Heart left ventricle (tissue), 16 donors: ENCODE measurements at regions of chr17 and their contacts with region 1.

Region 1: GRCh38 chr17:28763804-28764266 is 20.0 kb downstream of the TRAF4 start:
- DNase-seq: peak in 3 of 5 donors; percentile 61 to 68 (median 64)
- ATAC-seq: peak in 2 of 4 donors; percentile 44 to 47
- H3K4me3 ChIP-seq: no peak overlapping the region
- H3K27ac ChIP-seq: no peak overlapping the region
- H3K4me1 ChIP-seq: peaks cover 0 to 23% (median 12%) of the 10 kb centered on the region in 12 donors
- H3K27me3 ChIP-seq: no peaks in the 10 kb centered on the region
- CTCF ChIP-seq: peak; percentile 85 to 95 (median 94)
- POLR2A ChIP-seq: no peak

Region 2: GRCh38 chr17:28644985-28645939 is 118.6 kb before region 1 on chr17 and contains the start of gene BLTP2:
- intact Hi-C with region 1: no loop called
- DNase-seq: peak; percentile 97 to 99 (median 98)
- ATAC-seq: peak; percentile 97 to 98 (median 98)
- H3K4me3 ChIP-seq: peak within 1 kb of the TSS; percentile 67 to 97 (median 90)
- H3K27ac ChIP-seq: peak within 1 kb of the TSS; percentile 85 to 98 (median 94)
- H3K4me1 ChIP-seq: peaks cover 4 to 60% (median 33%) of the 10 kb centered on the region in 12 donors
- H3K27me3 ChIP-seq: no peaks in the 10 kb centered on the region
- CTCF ChIP-seq: no peak
- POLR2A ChIP-seq: peak in 1 of 2 donors; percentile 91
- total RNA-seq, gene BLTP2: 63.6 to 116 (median 74.1) TPM

Region 3: GRCh38 chr17:28675980-28676379 is 87.9 kb before region 1 on chr17:
- intact Hi-C with region 1: no loop called
- DNase-seq: no peak
- ATAC-seq: no peak
- H3K4me3 ChIP-seq: no peak overlapping the region
- H3K27ac ChIP-seq: no peak overlapping the region
- H3K4me1 ChIP-seq: no peaks in the 10 kb centered on the region
- H3K27me3 ChIP-seq: no peaks in the 10 kb centered on the region
- CTCF ChIP-seq: peak in 2 of 12 donors; percentile 8 to 9
- POLR2A ChIP-seq: no peak

Region 4: GRCh38 chr17:28717578-28718333 is 46.1 kb before region 1 on chr17 and contains the start of gene RAB34:
- intact Hi-C with region 1: loop called in 1 of 10 experiments (anchors 5 kb)
- DNase-seq: peak; percentile 76 to 84 (median 80)
- ATAC-seq: peak in 3 of 4 donors; percentile 18 to 28 (median 23)
- H3K4me3 ChIP-seq: peak within 1 kb of the TSS; percentile 41 to 92 (median 74)
- H3K27ac ChIP-seq: peak within 1 kb of the TSS; percentile 66 to 96 (median 90)
- H3K4me1 ChIP-seq: peaks cover 0 to 61% (median 41%) of the 10 kb centered on the region in 12 donors
- H3K27me3 ChIP-seq: peaks cover 0 to 18% (median 0%) of the 10 kb centered on the region in 9 donors
- CTCF ChIP-seq: peak in 7 of 12 donors; percentile 16 to 49 (median 28)
- POLR2A ChIP-seq: peak in 1 of 2 donors; percentile 29
- total RNA-seq, gene RAB34: 11.5 to 31.7 (median 14.9) TPM

Region 5: GRCh38 chr17:28842282-28843012 is 78.6 kb after region 1 on chr17 and contains the start of gene FAM222B:
- intact Hi-C with region 1: loop called in 3 of 10 experiments (anchors 5 to 10 kb)
- DNase-seq: peak; percentile 84 to 94 (median 90)
- ATAC-seq: peak; percentile 93 to 100 (median 100)
- H3K4me3 ChIP-seq: peak within 1 kb of the TSS; percentile 53 to 94 (median 82)
- H3K27ac ChIP-seq: peak within 1 kb of the TSS; percentile 54 to 89 (median 78)
- H3K4me1 ChIP-seq: peaks cover 0 to 33% (median 8%) of the 10 kb centered on the region in 12 donors
- H3K27me3 ChIP-seq: no peaks in the 10 kb centered on the region
- CTCF ChIP-seq: peak in 2 of 12 donors; percentile 14 to 22
- POLR2A ChIP-seq: peak in 1 of 2 donors; percentile 71
- total RNA-seq, gene FAM222B: 14.4 to 33.2 (median 16.7) TPM

Region 6: DNA sequence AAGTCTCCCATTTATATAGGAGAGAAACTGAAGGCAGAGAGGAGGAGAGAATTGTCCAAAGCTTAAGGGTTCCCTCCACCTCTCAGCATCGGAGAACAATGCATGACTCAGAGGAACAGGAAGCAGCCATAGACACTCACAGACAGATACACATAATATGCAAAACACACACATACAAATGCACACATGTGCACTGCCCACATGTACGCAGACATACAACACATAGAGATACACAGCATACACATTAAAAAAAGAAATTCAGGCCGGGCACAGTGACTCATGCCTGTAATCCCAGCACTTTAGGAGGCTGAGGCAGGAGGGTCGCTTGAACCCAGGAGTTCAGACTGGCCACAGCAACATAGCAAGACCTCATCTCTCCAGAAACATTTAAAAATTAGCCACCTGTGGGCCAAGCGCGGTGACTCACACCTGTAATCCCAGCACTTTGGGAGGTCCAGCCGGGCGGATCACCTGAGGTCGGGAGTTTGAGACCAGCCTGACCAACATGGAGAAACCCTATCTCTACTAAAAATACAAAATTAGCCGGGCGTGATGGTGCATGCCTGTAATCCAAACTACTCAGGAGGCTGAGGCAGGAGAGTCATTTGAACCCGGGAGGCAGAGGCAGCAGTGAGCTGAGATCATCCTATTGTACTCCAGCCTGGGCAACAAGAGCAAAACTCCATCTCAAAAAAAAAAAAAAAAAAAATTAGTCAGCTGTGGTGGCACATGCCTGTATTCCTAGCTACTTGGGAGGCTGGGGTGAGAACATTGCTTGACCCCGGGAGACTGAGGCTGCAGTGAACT is 102.3 kb after region 1 on chr17:
- intact Hi-C with region 1: loop called in 1 of 10 experiments (anchors 10 kb)
- DNase-seq: peak in 1 of 5 donors; percentile 7
- ATAC-seq: no peak
- H3K4me3 ChIP-seq: no peak overlapping the region
- H3K27ac ChIP-seq: no peak overlapping the region
- H3K4me1 ChIP-seq: no peaks in the 10 kb centered on the region
- H3K27me3 ChIP-seq: no peaks in the 10 kb centered on the region
- CTCF ChIP-seq: no peak
- POLR2A ChIP-seq: no peak

Region 7: GRCh38 chr17:28896884-28897768 is 133.3 kb after region 1 on chr17 and contains the start of gene FLOT2:
- intact Hi-C with region 1: loop called in 6 of 10 experiments (anchors 5 kb)
- DNase-seq: peak; percentile 63 to 82 (median 64)
- ATAC-seq: peak; percentile 25 to 87 (median 77)
- H3K4me3 ChIP-seq: peak within 1 kb of the TSS; percentile 72 to 98 (median 92)
- H3K27ac ChIP-seq: peak within 1 kb of the TSS; percentile 60 to 97 (median 86)
- H3K4me1 ChIP-seq: peaks cover 3 to 69% (median 31%) of the 10 kb centered on the region in 12 donors
- H3K27me3 ChIP-seq: no peaks in the 10 kb centered on the region
- CTCF ChIP-seq: peak in 6 of 12 donors; percentile 9 to 45 (median 20)
- POLR2A ChIP-seq: peak in 1 of 2 donors; percentile 54
- total RNA-seq, gene FLOT2: 81.1 to 139 (median 95.2) TPM

Region 8: GRCh38 chr17:28916302-28916934 is 152.6 kb after region 1 on chr17:
- intact Hi-C with region 1: loop called in 7 of 10 experiments (anchors 1 to 10 kb)
- DNase-seq: peak in 1 of 5 donors; percentile 44
- ATAC-seq: peak; percentile 58 to 75 (median 66)
- H3K4me3 ChIP-seq: no peak overlapping the region
- H3K27ac ChIP-seq: no peak overlapping the region
- H3K4me1 ChIP-seq: peaks cover 0 to 10% (median 3%) of the 10 kb centered on the region in 12 donors
- H3K27me3 ChIP-seq: no peaks in the 10 kb centered on the region
- CTCF ChIP-seq: peak; percentile 56 to 76 (median 62)
- POLR2A ChIP-seq: no peak